ENCODE measurements at regions of chr15 and their contacts with region 1.

Region 1: DNA sequence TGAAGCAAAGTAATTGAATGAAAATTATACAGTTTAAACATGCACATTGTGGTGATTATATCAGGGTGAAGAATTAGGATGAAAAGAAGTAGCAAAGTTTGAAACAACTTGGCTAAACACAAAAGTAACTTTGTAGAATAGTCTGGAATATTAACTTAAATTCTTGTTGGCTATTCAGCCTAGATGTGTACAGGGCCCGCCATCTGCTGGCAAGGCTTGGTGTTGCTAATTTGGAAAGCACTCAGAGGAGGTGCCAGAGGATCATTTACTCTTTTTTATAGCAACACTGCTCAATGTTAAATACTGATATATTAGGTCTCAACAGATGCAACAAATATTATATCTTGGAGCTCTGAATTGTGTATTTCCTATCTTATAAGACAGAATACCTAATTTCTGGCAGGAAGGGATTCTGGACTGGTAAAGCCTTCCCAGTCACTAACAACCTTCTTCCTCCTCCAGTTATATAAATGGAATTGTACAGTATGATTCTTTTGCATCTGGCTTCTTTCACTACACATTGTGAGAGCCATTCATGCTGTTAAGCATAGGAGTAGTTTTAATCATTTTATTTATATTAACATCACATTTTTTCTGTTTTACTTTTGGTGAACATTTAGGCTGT is 36.1 kb downstream of the TTC23 start:
- DNase-seq: no peak
- H3K4me3 ChIP-seq: no peak overlapping the region
- H3K27ac ChIP-seq: no peak overlapping the region
- H3K4me1 ChIP-seq: no peaks in the 10 kb centered on the region
- H3K27me3 ChIP-seq: no peaks in the 10 kb centered on the region
- CTCF ChIP-seq: peak; percentile 69 to 91 (median 89)
- POLR2A ChIP-seq: no peak

Region 2: DNA sequence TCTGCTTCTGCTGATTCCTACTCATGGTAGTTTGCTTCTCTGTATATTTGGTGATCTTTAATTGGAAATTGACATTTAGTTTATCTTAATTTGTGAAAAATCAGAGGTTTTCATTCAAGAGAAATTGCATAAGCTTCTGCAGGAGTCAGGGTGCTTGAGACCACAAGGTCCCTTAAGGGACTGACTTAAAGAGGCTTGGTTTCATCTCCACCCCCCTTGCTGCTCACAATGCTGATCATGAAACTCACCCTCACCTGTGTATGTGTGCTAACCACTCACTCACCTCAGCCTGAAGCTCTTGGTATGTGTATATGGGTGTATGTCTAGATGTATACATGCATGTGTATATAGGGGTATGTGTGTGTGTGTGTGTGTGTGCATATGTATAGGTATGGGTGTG is 217.1 kb before region 1 on chr15:
- intact Hi-C with region 1: no loop called
- DNase-seq: no peak
- H3K4me3 ChIP-seq: no peak overlapping the region
- H3K27ac ChIP-seq: no peak overlapping the region
- H3K4me1 ChIP-seq: no peaks in the 10 kb centered on the region
- H3K27me3 ChIP-seq: no peaks in the 10 kb centered on the region
- CTCF ChIP-seq: no peak
- POLR2A ChIP-seq: no peak

Region 3: GRCh38 chr15:99104788-99105513 is 108.3 kb before region 1 on chr15 and contains the start of gene SYNM:
- intact Hi-C with region 1: loop called (anchors 2 kb)
- DNase-seq: peak; percentile 86 to 91
- H3K4me3 ChIP-seq: peak within 1 kb of the TSS; percentile 60 to 76
- H3K27ac ChIP-seq: peak within 1 kb of the TSS; percentile 86
- H3K4me1 ChIP-seq: peaks cover 18% of the 10 kb centered on the region
- H3K27me3 ChIP-seq: no peaks in the 10 kb centered on the region
- CTCF ChIP-seq: peak; percentile 31 to 82 (median 67)
- POLR2A ChIP-seq: peak in 1 of 2 donors; percentile 53
- total RNA-seq, gene SYNM: 62.6 TPM

Region 4: DNA sequence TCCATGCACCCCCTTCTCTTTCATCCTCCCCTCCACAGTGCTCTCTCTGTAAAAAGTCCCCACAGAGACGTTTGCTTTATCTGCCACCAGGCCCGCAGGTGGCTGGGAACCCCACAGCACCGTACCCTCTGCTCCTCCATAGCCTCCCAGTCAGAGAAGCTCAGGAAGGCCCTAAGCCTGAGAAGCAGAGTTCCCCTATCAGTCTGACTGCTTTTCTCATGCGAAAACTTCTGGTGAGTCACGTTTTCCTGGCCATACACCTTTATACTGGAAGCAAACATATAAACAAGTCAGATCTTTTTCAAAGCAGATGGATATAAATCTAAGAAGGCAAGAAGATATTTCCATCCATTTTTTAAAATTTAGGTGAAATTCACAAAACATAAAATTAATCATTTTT is 301.0 kb after region 1 on chr15:
- intact Hi-C with region 1: no loop called
- DNase-seq: no peak
- H3K4me3 ChIP-seq: no peak overlapping the region
- H3K27ac ChIP-seq: no peak overlapping the region
- H3K4me1 ChIP-seq: peaks cover 10% of the 10 kb centered on the region
- H3K27me3 ChIP-seq: no peaks in the 10 kb centered on the region
- CTCF ChIP-seq: no peak
- POLR2A ChIP-seq: no peak

Region 5: DNA sequence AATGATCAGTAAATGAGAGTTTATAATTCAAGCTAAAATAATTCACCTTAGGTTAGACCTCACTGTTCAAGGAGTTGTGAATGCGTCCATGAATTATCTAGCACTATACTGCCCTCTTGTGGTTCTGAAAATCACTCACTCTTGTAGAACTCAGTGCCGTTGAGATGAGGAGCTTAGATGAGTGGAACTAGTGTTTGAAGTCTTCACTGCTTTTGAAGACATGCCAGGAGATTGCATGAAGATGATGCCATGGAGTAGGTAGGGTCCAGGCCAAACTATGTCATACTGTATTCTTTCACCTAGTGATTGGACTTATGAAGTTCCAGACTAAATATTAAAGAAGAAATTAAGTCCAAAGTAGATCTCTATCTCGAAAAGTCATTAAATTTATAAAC is 491.1 kb after region 1 on chr15:
- intact Hi-C with region 1: no loop called
- DNase-seq: no peak
- H3K4me3 ChIP-seq: no peak overlapping the region
- H3K27ac ChIP-seq: peak overlapping the region; percentile 85
- H3K4me1 ChIP-seq: peaks cover 46% of the 10 kb centered on the region
- H3K27me3 ChIP-seq: no peaks in the 10 kb centered on the region
- CTCF ChIP-seq: peak; percentile 63 to 71 (median 70)
- POLR2A ChIP-seq: no peak